HEK293 (cell line): ENCODE measurements at regions of chr1 and their contacts with region 1.

Region 1: DNA sequence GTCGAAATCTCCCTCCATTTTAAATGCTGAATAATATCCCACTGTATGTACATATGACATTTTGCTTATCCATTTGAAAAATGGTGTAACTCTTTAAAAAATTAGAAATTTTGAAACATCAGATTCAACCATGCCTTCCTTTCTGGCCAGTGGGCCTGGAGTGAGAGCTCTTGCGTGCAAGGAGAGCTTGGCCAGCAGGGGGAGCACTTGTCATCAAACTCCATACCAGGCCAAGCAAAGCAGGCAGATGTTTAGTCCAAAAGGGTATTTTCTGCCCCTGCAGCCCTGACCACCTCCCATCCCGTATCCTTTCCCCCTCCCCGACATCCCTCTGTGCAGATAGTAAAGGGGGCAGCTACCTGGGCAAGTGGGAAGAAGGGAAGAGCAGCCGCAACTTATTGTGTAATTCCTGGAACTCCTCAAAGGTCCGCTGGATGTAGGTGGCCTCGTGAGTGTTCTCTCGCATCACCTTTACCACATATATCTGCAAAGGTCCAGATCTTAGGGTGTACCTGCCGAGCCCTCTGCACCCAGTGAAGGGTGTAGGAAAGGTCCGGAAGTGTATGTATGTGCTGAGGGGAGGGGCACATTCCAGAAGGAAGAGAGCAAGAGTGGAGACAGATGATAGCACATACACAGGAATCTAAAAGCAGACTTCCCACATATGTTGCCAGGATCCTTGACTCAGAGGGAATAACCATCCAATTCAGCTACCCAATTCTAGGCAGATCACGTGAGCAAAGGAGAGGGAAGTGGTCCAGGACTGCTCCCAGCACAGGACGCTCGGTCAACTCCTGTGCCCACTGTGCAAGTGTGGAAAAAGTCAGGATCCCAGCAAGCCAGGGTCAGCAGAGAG is 19.9 kb upstream of the PPP1R15B start:
- H3K4me3 ChIP-seq: no peak overlapping the region
- H3K27ac ChIP-seq: no peak overlapping the region
- H3K4me1 ChIP-seq: no peaks in the 10 kb centered on the region
- CTCF ChIP-seq: peak; percentile 50; the same call in 1 of the 2 replicates

Region 2: GRCh38 chr1:204417231-204417997 is 14.1 kb before region 1 on chr1:
- CTCF ChIA-PET with region 1: interaction called, 55 read pairs
- POLR2A ChIA-PET with region 1: no interaction called
- H3K4me3 ChIP-seq: peak overlapping the region; percentile 8; the same call in 1 of the 2 replicates
- H3K27ac ChIP-seq: peak overlapping the region; percentile 60
- H3K4me1 ChIP-seq: peaks cover 16% of the 10 kb centered on the region; the same call in 1 of the 2 replicates
- CTCF ChIP-seq: no peak